Ascending aorta (tissue), 2 donors: ENCODE measurements at regions of chr10 and their contacts with region 1.

Region 1: DNA sequence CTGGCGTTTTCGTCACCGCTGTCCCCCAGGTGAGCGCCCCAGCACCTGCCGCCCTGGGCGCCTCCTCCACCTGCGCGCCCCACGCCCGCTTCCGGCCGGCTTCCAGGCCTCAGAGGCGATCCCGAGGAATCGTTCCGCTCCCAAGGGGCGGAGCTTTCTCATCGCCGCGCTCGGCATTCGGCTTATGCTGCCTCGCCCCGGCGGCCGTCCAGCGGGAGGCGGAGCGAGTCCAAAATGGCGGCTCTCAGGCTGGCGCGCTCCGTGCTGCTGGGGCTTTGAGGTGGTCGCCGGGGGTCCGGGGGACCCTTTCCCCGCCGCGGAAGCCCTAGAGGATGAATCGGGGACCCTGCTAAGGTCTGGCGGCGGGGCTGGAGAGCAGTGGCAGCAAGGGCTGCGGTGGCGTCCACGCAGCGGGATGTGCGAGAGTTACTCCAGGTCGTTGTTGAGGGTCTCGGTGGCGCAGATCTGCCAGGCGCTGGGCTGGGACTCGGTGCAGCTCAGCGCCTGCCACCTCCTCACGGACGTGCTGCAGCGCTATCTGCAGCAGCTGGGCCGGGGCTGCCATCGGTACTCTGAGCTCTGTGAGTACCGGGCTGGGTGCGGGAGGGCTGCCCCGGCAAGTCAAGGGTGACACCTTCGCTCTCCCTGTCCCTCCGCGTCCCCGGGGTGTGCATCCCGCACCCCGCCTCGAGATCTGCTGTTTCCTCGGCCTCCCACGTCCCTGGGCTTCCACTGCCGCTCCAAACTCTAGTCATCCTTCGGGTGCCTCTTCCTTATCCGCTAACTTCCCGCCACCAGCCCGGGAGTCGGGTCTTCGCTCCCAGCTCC is at the start of gene TAF3:
- DNase-seq: peak; percentile 54 to 95
- H3K4me3 ChIP-seq: peak within 1 kb of the TSS; percentile 88
- H3K27ac ChIP-seq: peak within 1 kb of the TSS; percentile 32 to 61
- H3K4me1 ChIP-seq: peaks cover 0 to 13% of the 10 kb centered on the region in 2 donors
- H3K27me3 ChIP-seq: no peaks in the 10 kb centered on the region
- CTCF ChIP-seq: no peak
- total RNA-seq, gene TAF3: 8.5 TPM

Region 2: DNA sequence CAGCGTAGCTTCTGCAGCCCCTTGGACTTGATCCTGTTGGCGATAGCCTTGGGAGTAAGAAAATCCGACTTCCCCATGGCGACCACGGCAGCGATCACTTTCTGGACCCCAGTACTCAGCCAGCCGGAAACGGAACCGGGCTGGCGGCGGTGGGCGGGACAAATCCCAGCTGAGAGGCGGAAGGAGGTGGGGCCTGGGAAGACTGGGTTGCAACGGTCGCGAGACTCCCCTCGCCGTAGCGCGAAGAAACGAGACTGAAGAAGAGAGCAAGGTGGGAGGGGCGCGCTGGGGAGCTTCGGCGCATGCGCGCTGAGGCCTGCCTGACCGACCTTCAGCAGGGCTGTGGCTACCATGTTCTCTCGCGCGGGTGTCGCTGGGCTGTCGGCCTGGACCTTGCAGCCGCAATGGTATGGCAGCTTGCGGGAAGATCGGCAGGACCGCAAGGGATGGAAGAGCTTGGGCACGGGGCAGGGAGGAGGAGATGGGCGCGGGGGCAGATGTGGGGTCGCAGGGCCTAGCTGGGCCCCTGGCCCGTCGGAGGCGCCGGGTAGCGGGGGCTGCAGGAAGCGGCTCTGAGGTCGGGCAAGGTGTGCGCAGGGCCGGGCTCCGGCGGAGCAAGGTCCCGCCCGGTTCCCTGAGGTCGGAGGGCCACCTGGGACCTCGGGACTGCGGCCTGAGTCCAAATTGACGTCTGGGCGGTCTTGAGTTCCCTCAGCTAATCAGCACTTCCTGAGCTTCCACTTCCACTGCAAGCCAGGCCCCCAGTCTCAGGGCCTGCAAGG is 30.5 kb before region 1 on chr10 and contains the starts of genes ATP5F1C and KIN:
- intact Hi-C with region 1: loop called (anchors 1 kb)
- DNase-seq: peak; percentile 84 to 98
- H3K4me3 ChIP-seq: peak within 1 kb of the TSS; percentile 64 to 95
- H3K27ac ChIP-seq: peak within 1 kb of the TSS; percentile 75 to 80
- H3K4me1 ChIP-seq: peaks cover 0 to 22% of the 10 kb centered on the region in 2 donors
- H3K27me3 ChIP-seq: no peaks in the 10 kb centered on the region
- CTCF ChIP-seq: no peak
- total RNA-seq, gene ATP5F1C: 132 TPM
- total RNA-seq, gene KIN: 8.1 TPM